GM12878 (cell line): ENCODE measurements at regions of chr12 and their contacts with region 1.

Region 1: DNA sequence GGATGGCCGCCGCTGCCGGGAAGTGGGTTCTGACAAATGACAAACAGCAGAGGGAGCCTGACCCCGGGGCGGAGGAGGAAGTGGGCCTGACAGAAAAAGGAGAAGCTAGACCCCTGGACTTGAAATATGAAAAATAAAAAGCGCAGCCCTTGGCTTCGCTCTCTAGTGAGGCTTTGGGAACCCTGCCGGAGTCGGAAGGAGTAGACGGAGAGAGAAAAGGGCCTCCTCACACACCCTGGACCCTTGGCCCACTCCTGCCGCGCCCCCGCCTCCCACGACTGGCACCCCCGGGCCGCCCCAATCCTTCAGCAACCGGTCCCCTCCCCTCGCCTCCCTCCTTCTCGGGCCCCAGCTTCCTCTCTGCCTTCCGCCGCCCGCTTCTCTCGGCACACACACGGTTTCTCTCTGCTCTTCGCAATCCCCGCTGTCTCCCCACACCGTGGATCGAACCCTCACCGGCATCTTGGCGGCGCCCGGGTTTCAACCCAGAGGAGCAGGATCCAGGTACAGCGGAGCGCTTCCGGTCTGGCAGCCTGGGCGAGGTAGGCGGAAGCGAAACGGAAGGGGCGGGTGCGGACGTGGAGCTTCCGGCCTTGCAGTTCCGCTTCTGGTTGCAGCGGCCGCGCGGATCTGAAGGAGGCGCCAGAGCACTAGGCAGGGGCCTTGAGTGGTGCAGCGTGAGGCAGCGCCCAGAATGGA is at the start of gene ARPC3:
- DNase-seq: peak; percentile 77
- ATAC-seq: peak; percentile 98
- H3K4me3 ChIP-seq: peak within 1 kb of the TSS; percentile 97
- H3K27ac ChIP-seq: peak within 1 kb of the TSS; percentile 82
- H3K4me1 ChIP-seq: peaks cover 4% of the 10 kb centered on the region
- H3K27me3 ChIP-seq: no peaks in the 10 kb centered on the region
- CTCF ChIP-seq: peak; percentile 92 to 99 (median 94)
- EP300 ChIP-seq: no peak
- POLR2A ChIP-seq: peak; percentile 90
- RAD21 ChIP-seq: peak; percentile 93
- polyA plus RNA-seq, gene ARPC3: 635 to 890 TPM

Region 2: GRCh38 chr12:110501752-110502738 is 52.1 kb after region 1 on chr12 and contains the starts of genes RAD9B and VPS29:
- CTCF ChIA-PET with region 1: interaction called, 24 read pairs
- POLR2A ChIA-PET with region 1: interaction called, 7 read pairs
- RAD21 ChIA-PET with region 1: interaction called, 7 read pairs
- SMC1A ChIA-PET with region 1: interaction called, 23 read pairs
- in situ Hi-C with region 1: no loop called
- intact Hi-C with region 1: no loop called
- DNase-seq: peak; percentile 97
- ATAC-seq: peak; percentile 98
- H3K4me3 ChIP-seq: peak within 1 kb of the TSS; percentile 97
- H3K27ac ChIP-seq: peak within 1 kb of the TSS; percentile 92
- H3K4me1 ChIP-seq: peaks cover 4% of the 10 kb centered on the region
- H3K27me3 ChIP-seq: no peaks in the 10 kb centered on the region
- CTCF ChIP-seq: no peak
- EP300 ChIP-seq: peak in 1 of 2 experiments; percentile 81; a peak in 2 of 4 replicates
- POLR2A ChIP-seq: peak; percentile 99
- RAD21 ChIP-seq: no peak
- polyA plus RNA-seq, gene RAD9B: 1.2 to 2.0 TPM
- polyA plus RNA-seq, gene VPS29: 290 to 405 TPM

Region 3: GRCh38 chr12:110531741-110532333 is 81.9 kb after region 1 on chr12:
- CTCF ChIA-PET with region 1: interaction called, 4 read pairs
- POLR2A ChIA-PET with region 1: interaction called, 3 read pairs
- RAD21 ChIA-PET with region 1: interaction called, 11 read pairs
- SMC1A ChIA-PET with region 1: interaction called, 4 read pairs
- in situ Hi-C with region 1: no loop called
- intact Hi-C with region 1: no loop called
- DNase-seq: peak; percentile 96
- ATAC-seq: peak; percentile 90
- H3K4me3 ChIP-seq: peak overlapping the region; percentile 18
- H3K27ac ChIP-seq: peak overlapping the region; percentile 80
- H3K4me1 ChIP-seq: peaks cover 71% of the 10 kb centered on the region
- H3K27me3 ChIP-seq: no peaks in the 10 kb centered on the region
- CTCF ChIP-seq: no peak
- EP300 ChIP-seq: peak; percentile 95 to 96
- POLR2A ChIP-seq: no peak; the same call in 1 of the 2 replicates
- RAD21 ChIP-seq: no peak

Region 4: DNA sequence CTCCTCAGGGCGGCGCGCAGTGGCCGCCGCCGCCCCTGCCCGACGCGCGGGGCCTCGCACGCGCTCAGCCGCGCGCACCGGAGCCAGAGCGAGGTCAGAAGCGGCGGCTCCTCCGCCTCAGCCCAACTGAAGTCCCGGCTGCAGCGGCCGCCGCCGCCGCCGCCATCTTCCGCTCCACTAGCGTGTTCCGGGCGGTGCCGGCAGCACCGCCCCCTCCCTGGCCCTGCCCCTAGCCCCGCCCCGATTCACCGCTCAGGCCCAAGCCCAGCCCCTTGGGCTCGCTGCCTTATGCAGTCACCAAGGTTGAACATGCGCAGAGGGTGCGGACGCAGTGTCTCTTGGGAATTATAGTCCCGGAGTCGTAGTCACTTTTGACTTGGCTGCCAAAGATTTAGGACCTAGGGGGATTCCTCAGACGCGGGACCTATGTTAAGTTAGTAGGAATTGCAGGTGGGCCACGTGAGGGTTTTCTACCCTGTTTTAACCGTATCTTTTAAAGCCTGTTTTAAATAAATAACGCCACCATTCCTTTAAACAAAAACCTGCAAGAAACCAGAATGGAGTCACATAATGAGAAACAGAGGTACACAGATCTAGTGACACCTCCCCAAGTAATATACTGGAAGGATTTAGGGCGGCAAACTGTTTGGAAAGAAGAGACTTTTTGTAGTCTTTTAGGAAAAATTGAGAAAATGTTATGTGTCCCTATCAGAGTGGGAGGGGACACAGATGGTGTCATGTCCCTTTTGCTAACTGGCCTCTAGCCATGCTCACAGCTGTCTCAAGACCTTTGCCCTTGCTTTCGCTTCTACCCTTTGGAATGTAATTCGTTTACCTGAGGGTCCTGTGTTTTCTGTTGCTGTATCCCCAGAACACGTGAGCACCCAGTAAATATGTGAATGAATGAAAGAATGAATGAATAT is 133.4 kb after region 1 on chr12 and contains the start of gene PPTC7:
- CTCF ChIA-PET with region 1: interaction called, 10 read pairs
- POLR2A ChIA-PET with region 1: interaction called, 8 read pairs
- RAD21 ChIA-PET with region 1: interaction called, 10 read pairs
- SMC1A ChIA-PET with region 1: interaction called, 5 read pairs
- in situ Hi-C with region 1: no loop called
- intact Hi-C with region 1: loop called (anchors 5 kb)
- DNase-seq: peak; percentile 91
- ATAC-seq: peak; percentile 85
- H3K4me3 ChIP-seq: peak within 1 kb of the TSS; percentile 82
- H3K27ac ChIP-seq: peak within 1 kb of the TSS; percentile 95
- H3K4me1 ChIP-seq: peaks cover 36% of the 10 kb centered on the region
- H3K27me3 ChIP-seq: no peaks in the 10 kb centered on the region
- CTCF ChIP-seq: no peak
- EP300 ChIP-seq: no peak
- POLR2A ChIP-seq: peak; percentile 72
- RAD21 ChIP-seq: no peak
- polyA plus RNA-seq, gene PPTC7: 5.0 to 8.9 TPM

Region 5: GRCh38 chr12:110661337-110661972 is 211.5 kb after region 1 on chr12:
- CTCF ChIA-PET with region 1: no interaction called
- POLR2A ChIA-PET with region 1: no interaction called
- RAD21 ChIA-PET with region 1: no interaction called
- SMC1A ChIA-PET with region 1: no interaction called
- in situ Hi-C with region 1: no loop called
- intact Hi-C with region 1: no loop called
- DNase-seq: peak; percentile 92
- ATAC-seq: peak; percentile 95
- H3K4me3 ChIP-seq: peak overlapping the region; percentile 65
- H3K27ac ChIP-seq: peak overlapping the region; percentile 88
- H3K4me1 ChIP-seq: peaks cover 44% of the 10 kb centered on the region
- H3K27me3 ChIP-seq: no peaks in the 10 kb centered on the region
- CTCF ChIP-seq: no peak
- EP300 ChIP-seq: peak; percentile 90 to 97
- POLR2A ChIP-seq: peak; percentile 82
- RAD21 ChIP-seq: peak; percentile 18; the same call in 1 of the 2 replicates

Region 6: DNA sequence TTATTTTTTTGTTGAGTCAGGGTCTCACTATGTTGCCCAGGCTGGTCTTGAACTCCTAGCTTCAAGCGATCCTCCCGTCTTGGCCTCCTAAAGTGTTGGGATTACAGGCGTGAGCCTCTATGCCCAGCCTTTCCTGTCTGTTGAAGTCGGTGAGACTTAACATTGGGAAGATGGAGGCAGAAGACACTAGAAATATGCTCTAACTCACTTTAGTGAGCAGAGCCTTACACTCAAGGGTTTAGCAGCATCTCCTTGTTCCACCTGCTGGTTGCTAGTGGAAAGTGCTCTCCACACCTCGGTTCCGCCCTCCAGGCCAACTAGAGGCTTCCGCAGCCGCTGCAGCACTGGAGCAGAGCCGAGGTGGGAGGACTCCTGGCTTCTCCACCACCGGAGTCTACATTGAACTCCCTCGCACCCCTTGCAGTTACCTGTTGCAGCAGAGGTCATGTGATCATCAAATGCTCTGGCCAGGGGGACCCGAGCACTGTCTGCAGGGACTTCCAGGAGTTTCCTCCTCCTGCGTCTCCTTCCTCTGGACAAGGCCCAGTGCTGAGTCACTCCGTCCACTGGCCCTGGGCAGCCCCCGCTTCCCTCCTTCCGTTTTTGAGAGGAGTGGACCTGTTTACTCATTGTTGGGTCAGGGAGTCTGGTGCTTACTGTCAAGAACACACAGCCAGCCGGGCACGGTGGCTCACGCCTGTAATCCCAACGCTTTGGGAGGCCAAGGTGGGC is 248.4 kb after region 1 on chr12:
- CTCF ChIA-PET with region 1: interaction called, 4 read pairs
- POLR2A ChIA-PET with region 1: no interaction called
- RAD21 ChIA-PET with region 1: interaction called, 6 read pairs
- SMC1A ChIA-PET with region 1: interaction called, 3 read pairs
- in situ Hi-C with region 1: no loop called
- intact Hi-C with region 1: loop called (anchors 1 kb)
- DNase-seq: peak; percentile 90
- ATAC-seq: peak; percentile 99
- H3K4me3 ChIP-seq: no peak overlapping the region
- H3K27ac ChIP-seq: peak overlapping the region; percentile 64
- H3K4me1 ChIP-seq: peaks cover 29% of the 10 kb centered on the region
- H3K27me3 ChIP-seq: no peaks in the 10 kb centered on the region
- CTCF ChIP-seq: peak; percentile 88 to 90 (median 89)
- EP300 ChIP-seq: no peak
- POLR2A ChIP-seq: no peak
- RAD21 ChIP-seq: peak; percentile 92

Region 7: GRCh38 chr12:111221062-111222026 is 771.4 kb after region 1 on chr12:
- CTCF ChIA-PET with region 1: no interaction called
- POLR2A ChIA-PET with region 1: interaction called, 11 read pairs
- RAD21 ChIA-PET with region 1: no interaction called
- SMC1A ChIA-PET with region 1: no interaction called
- in situ Hi-C with region 1: no loop called
- intact Hi-C with region 1: no loop called
- DNase-seq: no peak
- ATAC-seq: no peak
- H3K4me3 ChIP-seq: no peak overlapping the region
- H3K27ac ChIP-seq: no peak overlapping the region
- H3K4me1 ChIP-seq: no peaks in the 10 kb centered on the region
- H3K27me3 ChIP-seq: peaks cover 3% of the 10 kb centered on the region in 2 experiments; a peak in 3 of 4 replicates
- CTCF ChIP-seq: no peak
- EP300 ChIP-seq: no peak
- POLR2A ChIP-seq: no peak
- RAD21 ChIP-seq: no peak